HEK293T (cell line): ENCODE measurements at regions of chr4 and their contacts with region 1.

Region 1: DNA sequence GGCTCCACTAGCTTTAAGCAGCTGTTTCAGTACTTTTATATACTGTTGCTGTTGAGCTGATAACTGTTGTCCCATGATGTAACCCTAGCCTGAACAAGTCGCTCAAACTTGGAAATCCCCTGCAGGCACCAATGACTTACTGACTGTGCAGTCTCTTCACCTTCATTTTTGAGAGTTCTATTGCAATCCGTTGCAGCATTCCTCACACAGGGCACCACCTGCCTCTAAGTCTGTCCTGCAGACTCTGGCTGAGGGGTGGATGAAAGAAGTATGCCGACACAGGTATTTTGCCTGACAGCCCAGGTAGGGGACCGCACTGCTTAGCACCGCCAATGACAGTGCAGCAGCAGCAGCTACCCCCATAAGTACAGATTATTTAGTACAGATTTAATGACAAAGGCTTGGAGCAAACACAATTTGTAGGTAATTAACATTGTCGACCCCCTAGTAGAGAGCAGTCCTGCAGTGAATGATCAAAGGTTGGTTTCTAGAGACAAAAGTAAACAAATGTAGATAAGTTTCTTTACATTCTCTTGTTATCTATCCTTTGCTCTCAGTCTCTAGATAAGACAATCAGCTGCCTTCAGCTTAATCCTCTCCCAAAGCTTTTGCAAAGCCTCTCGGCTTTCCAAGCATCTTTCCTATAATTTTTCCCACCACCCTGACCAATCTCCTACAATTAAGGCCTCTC is 205.0 kb downstream of the PABPC4L start:
- DNase-seq: no peak

Region 2: GRCh38 chr4:134422776-134423175 is 426.2 kb after region 1 on chr4:
- CTCF ChIA-PET with region 1: no interaction called
- POLR2A ChIA-PET with region 1: no interaction called
- DNase-seq: no peak

Region 3: GRCh38 chr4:134533068-134533467 is 536.5 kb after region 1 on chr4:
- CTCF ChIA-PET with region 1: interaction called, 11 read pairs
- POLR2A ChIA-PET with region 1: no interaction called
- DNase-seq: no peak